ENCODE measurements at regions of chr2 and their contacts with region 1.

Region 1: GRCh38 chr2:234951664-234952269 is at the start of gene SH3BP4:
- DNase-seq: peak; percentile 62
- ATAC-seq: peak; percentile 68
- H3K4me3 ChIP-seq: peak within 1 kb of the TSS; percentile 83
- H3K27ac ChIP-seq: peak within 1 kb of the TSS; percentile 29
- H3K4me1 ChIP-seq: peaks cover 32% of the 10 kb centered on the region
- H3K27me3 ChIP-seq: no peaks in the 10 kb centered on the region
- CTCF ChIP-seq: no peak
- total RNA-seq, gene SH3BP4: 35.2 and 47.3 TPM in 2 replicates

Region 2: GRCh38 chr2:234550511-234551107 is 401.2 kb before region 1 on chr2:
- CTCF ChIA-PET with region 1: no interaction called
- POLR2A ChIA-PET with region 1: no interaction called
- intact Hi-C with region 1: loop called (anchors 10 kb)
- DNase-seq: peak; percentile 79
- ATAC-seq: peak; percentile 97
- H3K4me3 ChIP-seq: no peak overlapping the region
- H3K27ac ChIP-seq: no peak overlapping the region
- H3K4me1 ChIP-seq: peaks cover 4% of the 10 kb centered on the region; the same call in 1 of the 2 replicates
- H3K27me3 ChIP-seq: no peaks in the 10 kb centered on the region
- CTCF ChIP-seq: peak; percentile 94

Region 3: DNA sequence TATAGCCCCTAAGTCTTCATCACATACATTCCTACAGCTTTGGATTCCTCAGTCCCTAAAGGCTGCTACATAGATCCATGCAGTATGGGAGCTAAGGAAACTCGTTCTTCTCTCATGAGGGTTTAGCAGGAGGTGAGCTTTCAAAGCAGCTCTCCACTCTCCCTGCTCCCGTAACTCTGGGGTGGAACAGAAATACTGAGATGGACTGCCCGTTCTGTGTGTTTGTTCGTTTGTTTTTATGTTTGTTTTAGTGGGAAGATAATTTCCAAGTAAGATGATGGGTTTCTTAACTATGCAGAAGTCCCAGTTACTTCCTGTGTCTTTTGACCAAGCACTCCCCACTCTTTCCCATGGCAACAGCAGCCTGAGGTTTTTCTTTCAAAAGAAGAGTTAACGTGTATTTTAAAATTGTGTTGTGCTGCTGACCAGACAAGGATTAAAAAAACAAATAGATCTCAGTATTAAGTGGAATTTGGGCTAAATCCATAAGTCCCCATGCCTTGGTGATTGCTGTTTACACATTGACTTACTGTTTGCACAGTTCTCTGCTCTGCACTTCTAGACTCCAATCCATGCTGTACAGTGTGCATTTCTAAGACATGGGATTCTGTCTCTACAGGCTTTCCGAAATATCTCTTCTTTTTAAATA is 156.4 kb before region 1 on chr2:
- CTCF ChIA-PET with region 1: no interaction called
- POLR2A ChIA-PET with region 1: no interaction called
- intact Hi-C with region 1: no loop called
- DNase-seq: no peak
- ATAC-seq: no peak
- H3K4me3 ChIP-seq: no peak overlapping the region
- H3K27ac ChIP-seq: no peak overlapping the region
- H3K4me1 ChIP-seq: no peaks in the 10 kb centered on the region
- H3K27me3 ChIP-seq: no peaks in the 10 kb centered on the region
- CTCF ChIP-seq: no peak

Region 4: GRCh38 chr2:234823877-234824376 is 127.8 kb before region 1 on chr2:
- CTCF ChIA-PET with region 1: no interaction called
- POLR2A ChIA-PET with region 1: no interaction called
- intact Hi-C with region 1: loop called (anchors 10 kb)
- DNase-seq: peak; percentile 92
- ATAC-seq: peak; percentile 99
- H3K4me3 ChIP-seq: peak overlapping the region; percentile 26; the same call in 1 of the 2 replicates
- H3K27ac ChIP-seq: peak overlapping the region; percentile 58
- H3K4me1 ChIP-seq: peaks cover 17% of the 10 kb centered on the region
- H3K27me3 ChIP-seq: no peaks in the 10 kb centered on the region
- CTCF ChIP-seq: no peak

Region 5: DNA sequence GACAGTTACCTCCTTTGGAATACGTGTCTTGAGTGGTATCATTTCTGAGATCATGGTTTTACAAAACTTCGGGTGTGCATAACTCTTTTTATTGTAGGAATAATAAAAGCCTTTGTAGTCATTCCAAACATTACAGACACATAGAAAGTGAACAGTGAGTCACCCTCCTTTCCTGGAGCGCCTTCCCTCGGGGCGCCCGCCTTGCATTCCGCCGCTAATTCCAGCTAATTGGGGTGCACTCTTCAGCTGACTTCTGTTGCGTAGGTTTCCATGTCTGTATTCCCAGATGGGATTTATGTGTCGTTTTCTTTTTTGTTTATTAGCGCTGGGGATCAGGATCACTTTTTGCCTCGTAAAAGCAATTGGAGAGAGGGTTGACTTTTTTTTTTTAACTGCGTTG is 18.7 kb after region 1 on chr2:
- CTCF ChIA-PET with region 1: no interaction called
- POLR2A ChIA-PET with region 1: no interaction called
- intact Hi-C with region 1: loop called (anchors 1 kb)
- DNase-seq: peak; percentile 83
- ATAC-seq: peak; percentile 78
- H3K4me3 ChIP-seq: peak overlapping the region; percentile 53
- H3K27ac ChIP-seq: peak overlapping the region; percentile 80
- H3K4me1 ChIP-seq: peaks cover 40% of the 10 kb centered on the region
- H3K27me3 ChIP-seq: no peaks in the 10 kb centered on the region
- CTCF ChIP-seq: no peak

Region 6: GRCh38 chr2:235021752-235022151 is 70.0 kb after region 1 on chr2:
- CTCF ChIA-PET with region 1: no interaction called
- POLR2A ChIA-PET with region 1: no interaction called
- intact Hi-C with region 1: loop called (anchors 1 kb)
- DNase-seq: peak; percentile 95
- ATAC-seq: peak; percentile 70
- H3K4me3 ChIP-seq: no peak overlapping the region
- H3K27ac ChIP-seq: peak overlapping the region; percentile 87
- H3K4me1 ChIP-seq: peaks cover 63% of the 10 kb centered on the region
- H3K27me3 ChIP-seq: no peaks in the 10 kb centered on the region
- CTCF ChIP-seq: no peak

Region 7: DNA sequence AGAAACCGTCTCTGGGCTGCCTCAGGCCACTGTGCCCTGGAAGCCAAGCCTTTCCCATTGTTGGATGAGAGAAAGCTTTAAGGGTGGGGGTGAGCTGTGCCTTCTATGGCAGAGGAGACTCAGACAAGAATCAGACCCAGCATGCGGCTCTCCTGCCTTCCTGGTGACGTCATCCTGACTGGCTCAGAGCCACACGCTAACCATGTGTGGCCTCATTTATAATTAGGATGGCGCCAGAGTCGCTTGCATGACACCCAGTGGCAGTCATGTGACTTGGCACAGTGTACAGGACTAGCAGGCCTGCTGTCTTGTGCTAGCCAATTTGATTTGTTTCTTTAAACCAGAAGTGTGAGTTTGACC is 99.2 kb after region 1 on chr2:
- CTCF ChIA-PET with region 1: no interaction called
- POLR2A ChIA-PET with region 1: interaction called, 18 read pairs
- intact Hi-C with region 1: no loop called
- DNase-seq: peak; percentile 80
- ATAC-seq: peak; percentile 74
- H3K4me3 ChIP-seq: no peak overlapping the region
- H3K27ac ChIP-seq: peak overlapping the region; percentile 45
- H3K4me1 ChIP-seq: peaks cover 8% of the 10 kb centered on the region
- H3K27me3 ChIP-seq: no peaks in the 10 kb centered on the region
- CTCF ChIP-seq: peak; percentile 36; the same call in 1 of the 2 replicates

Region 8: GRCh38 chr2:235063471-235063961 is 111.7 kb after region 1 on chr2:
- CTCF ChIA-PET with region 1: no interaction called
- POLR2A ChIA-PET with region 1: no interaction called
- intact Hi-C with region 1: no loop called
- DNase-seq: no peak
- ATAC-seq: no peak
- H3K4me3 ChIP-seq: no peak overlapping the region
- H3K27ac ChIP-seq: no peak overlapping the region
- H3K4me1 ChIP-seq: no peaks in the 10 kb centered on the region
- H3K27me3 ChIP-seq: no peaks in the 10 kb centered on the region
- CTCF ChIP-seq: no peak

Measured in PC-3 (cell line).